ENCODE measurements at regions of chr5 and their contacts with region 1.

Region 1: GRCh38 chr5:61408476-61409168 is 76.6 kb downstream of the ZSWIM6 start:
- DNase-seq: peak; percentile 89
- H3K4me3 Mint-ChIP-seq: peak overlapping the region; percentile 54
- H3K27ac Mint-ChIP-seq: no peak overlapping the region
- H3K4me1 Mint-ChIP-seq: peaks cover 20% of the 10 kb centered on the region
- H3K27me3 Mint-ChIP-seq: peaks cover 5% of the 10 kb centered on the region

Region 2: DNA sequence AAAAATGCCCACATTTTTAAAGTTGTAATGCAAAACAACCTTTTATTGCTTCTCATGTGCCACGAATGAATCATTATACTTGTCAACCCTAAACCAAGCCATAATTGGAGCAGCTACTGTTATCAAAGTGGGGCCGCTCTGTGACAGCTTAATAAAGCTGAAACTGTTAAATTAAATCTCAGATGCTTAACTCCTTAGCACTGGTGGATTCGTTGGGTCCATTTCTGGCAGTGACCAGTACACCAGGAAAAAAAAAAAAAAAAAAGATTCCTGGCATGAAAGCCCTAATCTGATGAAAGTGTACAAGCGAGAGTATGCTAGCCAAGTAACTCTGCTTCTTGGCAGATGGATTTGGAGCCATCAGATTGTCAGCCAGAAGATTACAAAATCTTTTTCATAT is 88.2 kb after region 1 on chr5:
- intact Hi-C with region 1: no loop called
- DNase-seq: no peak
- H3K4me3 Mint-ChIP-seq: no peak overlapping the region
- H3K27ac Mint-ChIP-seq: no peak overlapping the region
- H3K4me1 Mint-ChIP-seq: no peaks in the 10 kb centered on the region
- H3K27me3 Mint-ChIP-seq: no peaks in the 10 kb centered on the region

Region 3: DNA sequence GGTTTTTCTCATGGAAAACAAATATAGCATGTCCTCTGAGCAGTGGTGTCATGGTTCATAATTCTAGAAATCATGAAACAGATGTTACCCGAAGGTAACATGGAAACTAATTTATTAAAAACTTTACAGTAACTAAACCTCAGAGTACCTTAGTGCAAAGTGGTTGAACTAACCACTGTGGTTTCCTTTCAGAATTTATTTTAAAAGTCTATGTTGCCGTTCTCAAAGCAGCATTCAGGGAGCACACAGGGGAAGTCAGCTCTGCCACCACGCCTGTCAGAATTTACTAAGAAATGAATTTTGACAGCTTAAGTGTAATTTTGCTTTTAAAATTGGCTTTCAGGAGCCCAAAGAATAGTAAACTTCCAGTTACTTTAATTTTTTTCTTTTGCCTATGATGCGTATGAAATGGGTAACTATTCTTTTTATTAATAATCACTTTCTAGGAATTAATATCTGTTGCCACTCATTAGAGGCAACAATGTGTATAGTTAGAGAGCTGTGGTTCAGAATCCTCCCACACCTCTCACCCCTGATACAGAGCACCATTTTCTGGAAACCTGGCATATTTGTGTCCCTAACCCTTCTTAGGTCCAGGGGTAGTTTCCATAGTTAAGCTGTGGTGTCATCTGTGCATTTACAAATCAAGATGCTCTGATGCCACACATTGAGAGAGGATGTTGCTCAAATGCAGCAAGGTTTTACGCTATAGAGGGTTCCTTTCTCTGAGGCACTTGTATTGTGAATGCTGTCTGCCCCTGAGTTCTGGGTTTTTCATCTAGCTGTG is 126.1 kb after region 1 on chr5:
- intact Hi-C with region 1: loop called (anchors 5 kb)
- DNase-seq: no peak
- H3K4me3 Mint-ChIP-seq: no peak overlapping the region
- H3K27ac Mint-ChIP-seq: peak overlapping the region; percentile 4
- H3K4me1 Mint-ChIP-seq: peaks cover 16% of the 10 kb centered on the region
- H3K27me3 Mint-ChIP-seq: no peaks in the 10 kb centered on the region

Region 4: DNA sequence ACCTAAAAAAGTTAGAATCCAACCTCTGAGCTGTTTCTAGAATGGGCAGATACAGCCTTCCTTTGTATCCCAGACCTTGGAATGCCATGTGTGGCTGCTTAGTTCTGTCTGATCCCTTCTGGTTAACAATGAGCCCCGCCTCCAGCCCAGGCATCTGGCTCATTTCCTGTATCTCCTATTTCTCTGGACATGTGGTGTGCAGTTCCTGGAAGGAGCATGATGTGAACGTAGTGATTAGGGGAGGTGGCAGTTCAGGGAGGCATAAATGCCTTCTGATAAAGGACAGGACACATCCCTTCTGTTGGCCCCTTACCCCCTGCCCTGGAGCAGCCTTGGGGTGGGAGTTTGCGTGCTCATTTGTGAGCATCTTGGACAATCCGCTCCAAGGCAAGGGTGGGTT is 166.5 kb after region 1 on chr5:
- intact Hi-C with region 1: loop called (anchors 5 kb)
- DNase-seq: no peak
- H3K4me3 Mint-ChIP-seq: no peak overlapping the region
- H3K27ac Mint-ChIP-seq: no peak overlapping the region
- H3K4me1 Mint-ChIP-seq: no peaks in the 10 kb centered on the region
- H3K27me3 Mint-ChIP-seq: no peaks in the 10 kb centered on the region

Region 5: GRCh38 chr5:61625681-61626621 is 217.3 kb after region 1 on chr5:
- intact Hi-C with region 1: loop called (anchors 5 kb)
- DNase-seq: no peak
- H3K4me3 Mint-ChIP-seq: no peak overlapping the region
- H3K27ac Mint-ChIP-seq: no peak overlapping the region
- H3K4me1 Mint-ChIP-seq: peaks cover 2% of the 10 kb centered on the region
- H3K27me3 Mint-ChIP-seq: peaks cover 49% of the 10 kb centered on the region

Region 6: GRCh38 chr5:61658592-61659008 is 250.0 kb after region 1 on chr5:
- intact Hi-C with region 1: loop called (anchors 5 kb)
- DNase-seq: peak; percentile 56
- H3K4me3 Mint-ChIP-seq: no peak overlapping the region
- H3K27ac Mint-ChIP-seq: no peak overlapping the region
- H3K4me1 Mint-ChIP-seq: peaks cover 2% of the 10 kb centered on the region
- H3K27me3 Mint-ChIP-seq: peaks cover 14% of the 10 kb centered on the region